Mammary epithelial cell (primary cell): ENCODE measurements at regions of chr16 and their contacts with region 1.

Region 1: DNA sequence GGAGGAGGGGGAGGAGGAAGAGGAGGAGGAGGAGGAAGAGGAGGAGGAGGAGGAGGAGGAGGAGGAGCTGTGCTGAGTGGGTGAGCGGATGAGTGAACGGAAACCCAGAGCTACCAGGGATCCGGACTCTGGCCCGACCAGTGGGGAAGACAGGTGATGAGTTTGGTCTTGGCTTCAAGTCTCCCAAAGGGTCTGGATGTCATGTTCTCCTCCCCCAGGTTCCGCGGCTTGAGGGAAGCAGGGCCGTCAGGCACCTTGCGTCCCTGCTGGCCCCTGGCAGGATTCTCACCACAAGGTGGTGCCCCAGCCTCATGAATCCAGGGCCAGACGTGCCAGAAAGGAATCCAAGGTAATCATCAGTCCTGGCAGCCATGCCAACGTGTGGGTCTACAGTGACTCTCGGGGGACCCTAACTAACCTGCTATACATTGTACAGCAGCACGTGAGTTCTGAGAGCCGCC is 13.5 kb upstream of the ABAT start:
- DNase-seq: peak; percentile 65
- H3K4me3 ChIP-seq: peak overlapping the region in 1 of 3 experiments; percentile 19
- H3K27ac ChIP-seq: no peak overlapping the region
- H3K4me1 ChIP-seq: no peaks in the 10 kb centered on the region
- H3K27me3 ChIP-seq: no peaks in the 10 kb centered on the region
- CTCF ChIP-seq: peak; percentile 54 to 84

Region 2: DNA sequence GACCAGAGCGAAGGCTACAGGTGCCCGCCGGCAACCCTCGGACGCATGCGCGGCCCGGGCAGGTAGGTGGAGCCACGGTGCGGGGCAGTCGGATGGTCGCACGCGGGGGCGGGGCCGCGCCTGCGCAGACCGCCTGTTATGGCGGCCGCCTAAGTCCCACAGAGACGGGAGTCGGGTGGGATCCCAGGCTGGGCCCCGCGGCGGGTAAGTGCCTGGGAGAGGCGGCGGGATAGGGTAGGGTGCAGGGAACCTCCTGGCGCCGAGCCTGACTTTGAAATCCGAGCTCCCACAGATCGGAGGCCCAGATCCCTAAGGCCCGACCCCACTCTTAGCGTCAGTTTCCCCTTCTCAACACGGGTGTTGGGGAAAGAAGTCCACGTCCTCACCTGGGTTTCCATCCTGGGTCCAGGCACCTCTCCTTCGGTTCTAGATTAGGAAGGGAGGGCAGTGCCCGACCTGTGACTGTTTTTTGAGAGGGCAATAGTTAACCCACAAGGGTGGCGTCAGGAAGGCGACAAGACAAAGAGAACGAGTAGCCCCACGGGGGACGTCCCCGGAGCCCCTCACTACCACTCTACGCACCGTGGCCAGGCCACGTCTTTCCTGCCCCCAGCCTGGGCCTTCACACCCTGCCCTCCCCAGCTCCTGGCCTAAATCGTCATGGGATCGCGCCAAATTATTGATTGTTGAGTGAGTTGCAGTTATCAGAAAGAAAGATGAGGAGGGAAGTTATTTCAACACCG is 39.1 kb before region 1 on chr16 and contains the start of gene METTL22:
- CTCF ChIA-PET with region 1: no interaction called
- dilution Hi-C with region 1: no loop called
- in situ Hi-C with region 1: no loop called
- intact Hi-C with region 1: no loop called
- DNase-seq: peak; percentile 74
- H3K4me3 ChIP-seq: peak within 1 kb of the TSS; percentile 63 to 85 (median 79)
- H3K27ac ChIP-seq: peak within 1 kb of the TSS; percentile 83
- H3K4me1 ChIP-seq: peaks cover 10% of the 10 kb centered on the region
- H3K27me3 ChIP-seq: no peaks in the 10 kb centered on the region
- CTCF ChIP-seq: no peak
- total RNA-seq, gene METTL22: 35.2 to 40.9 TPM

Region 3: GRCh38 chr16:8692502-8692901 is 31.6 kb after region 1 on chr16:
- CTCF ChIA-PET with region 1: no interaction called
- dilution Hi-C with region 1: no loop called
- in situ Hi-C with region 1: no loop called
- intact Hi-C with region 1: no loop called
- DNase-seq: no peak
- H3K4me3 ChIP-seq: no peak overlapping the region
- H3K27ac ChIP-seq: no peak overlapping the region
- H3K4me1 ChIP-seq: no peaks in the 10 kb centered on the region
- H3K27me3 ChIP-seq: no peaks in the 10 kb centered on the region
- CTCF ChIP-seq: no peak

Region 4: DNA sequence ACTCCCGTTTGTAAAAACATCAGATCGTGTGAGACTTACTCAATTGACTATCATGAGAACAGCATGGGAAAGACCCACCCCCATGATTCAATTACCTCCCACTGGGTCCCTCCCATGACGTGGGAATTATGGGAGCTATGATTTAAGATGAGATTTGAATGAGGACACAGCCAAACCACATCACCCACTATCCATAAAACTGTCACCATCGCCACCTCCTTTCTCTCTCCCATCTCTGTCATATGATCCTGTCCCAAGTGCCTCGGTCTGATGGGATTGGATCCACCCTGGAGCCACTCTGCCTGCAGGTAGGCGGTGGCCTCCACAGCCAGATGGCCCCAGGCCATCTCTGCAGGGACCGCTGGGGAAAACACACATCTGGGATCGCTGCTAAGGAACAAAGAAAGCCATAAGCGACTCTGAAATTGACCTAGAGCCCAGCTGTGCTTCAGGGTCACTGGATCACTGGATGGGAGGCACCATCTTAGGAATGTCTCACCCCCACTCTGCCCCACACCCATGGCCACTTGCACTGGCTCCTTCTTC is 75.3 kb after region 1 on chr16:
- CTCF ChIA-PET with region 1: no interaction called
- dilution Hi-C with region 1: no loop called
- in situ Hi-C with region 1: no loop called
- intact Hi-C with region 1: no loop called
- DNase-seq: no peak
- H3K4me3 ChIP-seq: no peak overlapping the region
- H3K27ac ChIP-seq: no peak overlapping the region
- H3K4me1 ChIP-seq: no peaks in the 10 kb centered on the region
- H3K27me3 ChIP-seq: no peaks in the 10 kb centered on the region
- CTCF ChIP-seq: no peak

Region 5: DNA sequence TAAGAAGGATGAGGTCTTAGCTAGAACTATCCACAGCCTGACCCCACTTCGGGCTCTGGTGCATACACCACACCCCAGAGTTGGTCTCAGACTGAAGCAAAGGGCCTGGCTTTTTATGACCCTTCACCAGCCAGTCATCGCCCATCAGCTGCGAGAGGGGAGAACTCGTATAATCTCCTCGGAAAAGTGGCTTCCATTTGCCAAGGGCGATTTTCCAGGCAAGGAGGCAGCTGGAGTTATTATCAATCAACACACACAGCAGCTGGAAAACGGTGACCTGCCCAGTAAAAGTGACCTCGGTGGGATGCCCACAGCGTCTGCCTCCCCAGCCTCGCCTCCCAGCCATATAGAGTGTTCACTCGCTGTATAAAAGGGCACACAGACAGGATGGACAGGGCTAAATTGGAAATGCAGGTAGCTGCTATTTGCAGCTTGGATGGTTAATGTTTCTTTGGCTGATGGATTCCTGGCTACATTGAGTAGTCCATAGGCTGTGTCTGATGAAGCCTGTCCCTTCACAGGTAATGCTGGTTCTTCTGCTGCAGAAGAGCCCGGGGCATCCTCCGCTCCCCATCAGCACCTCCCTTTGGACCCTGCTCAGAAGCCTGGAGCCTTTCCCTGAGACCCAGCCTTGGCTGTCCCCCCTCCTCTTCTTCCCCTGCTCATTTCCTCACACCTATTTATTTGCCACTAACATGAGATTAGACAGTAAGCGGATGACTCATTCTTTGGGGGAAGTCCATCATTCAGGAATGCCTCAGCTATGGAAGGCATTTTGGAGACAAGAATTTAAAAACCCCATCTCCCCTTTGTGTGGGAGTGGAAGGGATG is 90.8 kb after region 1 on chr16:
- CTCF ChIA-PET with region 1: no interaction called
- dilution Hi-C with region 1: loop called (anchors 5 kb)
- in situ Hi-C with region 1: no loop called
- intact Hi-C with region 1: no loop called
- DNase-seq: peak; percentile 70
- H3K4me3 ChIP-seq: no peak overlapping the region
- H3K27ac ChIP-seq: no peak overlapping the region
- H3K4me1 ChIP-seq: peaks cover 8% of the 10 kb centered on the region
- H3K27me3 ChIP-seq: no peaks in the 10 kb centered on the region
- CTCF ChIP-seq: no peak

Region 6: GRCh38 chr16:8878521-8878911 is 217.6 kb after region 1 on chr16:
- CTCF ChIA-PET with region 1: interaction called, 4 read pairs
- dilution Hi-C with region 1: no loop called
- in situ Hi-C with region 1: loop called (anchors 10 kb)
- intact Hi-C with region 1: loop called (anchors 1 kb)
- DNase-seq: peak; percentile 72
- H3K4me3 ChIP-seq: no peak overlapping the region
- H3K27ac ChIP-seq: peak overlapping the region; percentile 34
- H3K4me1 ChIP-seq: peaks cover 15% of the 10 kb centered on the region
- H3K27me3 ChIP-seq: no peaks in the 10 kb centered on the region
- CTCF ChIP-seq: no peak

Region 7: DNA sequence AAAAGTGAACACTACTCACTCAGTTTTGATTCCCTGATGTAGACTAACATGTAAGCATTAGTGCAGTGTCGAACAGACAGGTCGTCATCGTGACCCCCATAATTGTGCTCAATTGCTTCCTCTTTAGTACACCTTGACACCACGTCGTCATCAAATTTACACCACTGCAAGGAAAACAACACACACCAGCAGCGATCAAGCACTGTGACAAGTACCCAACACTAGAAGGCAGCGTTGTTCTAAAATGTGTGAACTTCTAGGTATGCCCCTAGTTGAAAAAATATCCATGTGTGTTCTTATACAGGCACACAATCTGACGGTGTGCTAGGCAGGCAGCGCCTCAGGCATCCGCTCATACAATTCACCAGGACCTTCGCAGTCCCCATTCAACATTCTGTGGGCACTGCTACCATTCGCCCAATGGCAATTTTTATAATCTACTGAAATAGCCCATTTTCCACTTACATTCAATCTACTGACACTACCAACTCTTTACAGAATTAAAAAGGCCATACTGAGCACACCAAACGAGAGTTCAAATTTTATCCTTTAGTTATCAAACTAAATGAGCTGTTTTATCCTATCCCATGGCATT is 244.4 kb after region 1 on chr16:
- CTCF ChIA-PET with region 1: no interaction called
- dilution Hi-C with region 1: no loop called
- in situ Hi-C with region 1: no loop called
- intact Hi-C with region 1: no loop called
- DNase-seq: no peak
- H3K4me3 ChIP-seq: no peak overlapping the region
- H3K27ac ChIP-seq: no peak overlapping the region
- H3K4me1 ChIP-seq: no peaks in the 10 kb centered on the region
- H3K27me3 ChIP-seq: no peaks in the 10 kb centered on the region
- CTCF ChIP-seq: peak; percentile 32 to 36